Motor neuron (in vitro differentiated cells): ENCODE measurements at regions of chr7 and their contacts with region 1.

Region 1: DNA sequence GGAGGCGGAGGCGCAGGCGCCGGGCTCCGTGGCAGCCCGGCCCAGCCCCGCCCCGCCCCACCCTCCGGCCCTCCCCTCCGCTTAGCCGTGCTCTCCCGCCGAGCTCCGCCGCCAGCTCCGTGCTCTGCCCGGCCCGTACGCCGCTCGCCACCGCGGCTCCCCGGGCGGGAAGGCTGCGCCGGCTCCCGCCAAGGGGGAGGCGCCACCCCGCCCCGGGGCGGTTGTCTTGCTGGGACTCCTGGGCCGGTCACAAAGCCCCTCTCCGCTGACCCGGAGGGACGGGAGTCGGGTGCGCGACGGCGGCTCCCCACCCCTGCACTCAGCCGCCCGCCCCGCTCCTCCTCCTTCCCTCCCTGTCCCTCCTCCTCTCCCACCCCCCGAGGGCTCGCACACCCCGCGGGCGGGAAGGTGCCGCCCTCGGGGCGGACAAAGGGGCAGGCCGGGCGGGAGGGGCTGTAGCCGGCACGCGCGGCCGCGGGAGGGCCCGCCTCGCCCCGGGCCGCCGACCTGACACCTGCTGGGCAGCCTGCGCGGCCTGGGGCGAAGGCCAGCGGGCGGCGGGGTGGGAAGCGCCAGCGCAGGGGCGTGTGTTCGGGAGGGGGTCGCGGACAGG is 11.5 kb upstream of the SP8 start:
- ATAC-seq: peak; percentile 68 to 87 (median 82)
- H3K4me3 ChIP-seq: peak overlapping the region; percentile 46 to 69 (median 53)
- H3K27ac ChIP-seq: peak overlapping the region; percentile 78 to 85
- H3K4me1 ChIP-seq: peaks cover 20 to 45% of the 10 kb centered on the region in 2 donors

Region 2: GRCh38 chr7:20959271-20959670 is 161.1 kb after region 1 on chr7:
- in situ Hi-C with region 1: loop called in 2 of 9 experiments (anchors 25 kb)
- ATAC-seq: no peak
- H3K4me3 ChIP-seq: no peak overlapping the region
- H3K27ac ChIP-seq: no peak overlapping the region
- H3K4me1 ChIP-seq: peaks cover 29 to 53% of the 10 kb centered on the region in 2 donors

Region 3: DNA sequence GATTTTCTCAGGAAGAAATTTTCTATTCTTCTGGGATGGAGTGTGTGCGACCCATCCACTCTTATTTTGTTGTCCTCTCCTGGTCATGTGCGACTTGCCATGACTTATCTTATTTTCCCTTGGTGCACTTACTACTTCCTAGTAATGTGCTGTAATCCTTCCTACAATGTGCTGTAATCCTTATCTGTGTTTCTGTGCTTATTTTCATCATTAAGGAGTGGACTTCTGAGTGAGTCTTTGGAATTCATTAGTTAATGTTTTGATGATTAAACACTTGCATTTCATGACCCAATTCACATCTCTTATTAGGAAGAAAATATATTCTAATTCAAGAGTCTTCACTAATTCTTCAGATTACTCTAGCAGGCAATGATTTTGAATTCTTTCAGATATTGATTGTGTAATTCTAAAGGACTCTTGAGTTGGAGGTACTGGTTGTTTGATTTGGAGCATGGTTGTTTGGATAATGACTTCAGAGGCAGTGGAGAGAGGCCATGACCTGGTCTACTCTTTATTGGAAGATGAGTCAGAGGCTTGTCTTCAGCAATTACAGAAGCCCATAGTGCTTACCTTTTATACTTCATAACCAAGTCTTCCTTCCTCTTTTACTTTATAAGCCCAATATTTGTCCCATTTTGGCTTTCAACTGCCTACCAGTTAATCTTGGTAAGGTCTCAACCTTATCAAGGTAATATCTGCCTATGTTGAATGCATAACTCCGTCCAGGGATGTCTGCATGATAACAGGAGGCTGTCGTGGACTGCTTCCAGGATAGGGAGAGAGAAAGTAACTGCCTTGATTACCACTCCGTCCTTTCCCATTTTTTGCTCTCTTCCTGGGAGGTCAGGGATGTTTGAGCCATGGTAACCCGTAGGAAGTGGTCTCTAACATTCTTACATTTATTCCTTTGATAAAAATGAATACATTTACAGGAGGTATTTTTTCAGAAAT is 266.8 kb after region 1 on chr7:
- in situ Hi-C with region 1: no loop called
- ATAC-seq: peak in 4 of 8 experiments; percentile 47 to 86 (median 66)
- H3K4me3 ChIP-seq: no peak overlapping the region
- H3K27ac ChIP-seq: no peak overlapping the region
- H3K4me1 ChIP-seq: peaks cover 0 to 3% of the 10 kb centered on the region in 2 donors

Region 4: GRCh38 chr7:21253740-21254687 is 455.8 kb after region 1 on chr7:
- in situ Hi-C with region 1: loop called in 6 of 9 experiments (anchors 10 to 25 kb)
- ATAC-seq: peak; percentile 81 to 100 (median 97)
- H3K4me3 ChIP-seq: peak overlapping the region in 3 of 5 donors; percentile 7 to 20 (median 7)
- H3K27ac ChIP-seq: no peak overlapping the region
- H3K4me1 ChIP-seq: peaks cover 34 to 49% of the 10 kb centered on the region in 2 donors

Region 5: DNA sequence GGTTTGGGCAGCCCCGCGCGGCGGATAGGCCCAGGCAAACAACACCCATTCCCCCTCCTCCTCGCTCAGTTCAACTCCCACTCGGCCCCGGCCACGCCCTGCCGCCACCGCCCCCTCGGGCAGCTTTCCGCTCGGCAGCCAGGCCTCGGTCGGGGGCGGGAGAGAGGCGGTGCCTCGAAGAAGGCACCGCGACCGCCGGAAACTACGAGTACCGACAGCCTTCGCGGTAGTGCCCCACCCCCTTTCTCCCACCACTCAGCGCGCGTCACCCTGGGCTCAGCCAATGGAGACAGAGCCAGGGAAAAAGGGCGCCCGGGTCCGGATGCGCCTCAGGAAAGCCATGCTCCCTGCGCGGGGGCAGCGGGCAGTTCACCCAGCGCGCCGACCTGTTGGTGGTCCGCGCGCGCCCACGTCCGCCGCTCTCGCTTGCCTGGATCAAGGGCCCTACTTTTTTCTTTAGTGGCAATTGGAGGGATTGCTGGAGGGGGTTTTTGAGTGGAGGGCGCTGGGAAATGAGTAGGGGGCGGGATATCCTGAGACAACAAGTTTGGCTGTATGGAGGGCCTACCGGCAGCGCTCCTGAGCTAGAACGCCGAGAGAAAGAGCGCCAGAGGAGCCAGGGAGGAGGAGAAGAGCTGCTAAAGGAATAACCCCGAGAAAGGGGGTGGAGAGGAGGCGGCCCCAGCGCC is 629.1 kb after region 1 on chr7:
- in situ Hi-C with region 1: loop called in 1 of 9 experiments (anchors 25 kb)
- ATAC-seq: peak; percentile 78 to 84 (median 81)
- H3K4me3 ChIP-seq: peak overlapping the region; percentile 61 to 78 (median 66)
- H3K27ac ChIP-seq: peak overlapping the region; percentile 85 to 92
- H3K4me1 ChIP-seq: peaks cover 24 to 25% of the 10 kb centered on the region in 2 donors

Region 6: DNA sequence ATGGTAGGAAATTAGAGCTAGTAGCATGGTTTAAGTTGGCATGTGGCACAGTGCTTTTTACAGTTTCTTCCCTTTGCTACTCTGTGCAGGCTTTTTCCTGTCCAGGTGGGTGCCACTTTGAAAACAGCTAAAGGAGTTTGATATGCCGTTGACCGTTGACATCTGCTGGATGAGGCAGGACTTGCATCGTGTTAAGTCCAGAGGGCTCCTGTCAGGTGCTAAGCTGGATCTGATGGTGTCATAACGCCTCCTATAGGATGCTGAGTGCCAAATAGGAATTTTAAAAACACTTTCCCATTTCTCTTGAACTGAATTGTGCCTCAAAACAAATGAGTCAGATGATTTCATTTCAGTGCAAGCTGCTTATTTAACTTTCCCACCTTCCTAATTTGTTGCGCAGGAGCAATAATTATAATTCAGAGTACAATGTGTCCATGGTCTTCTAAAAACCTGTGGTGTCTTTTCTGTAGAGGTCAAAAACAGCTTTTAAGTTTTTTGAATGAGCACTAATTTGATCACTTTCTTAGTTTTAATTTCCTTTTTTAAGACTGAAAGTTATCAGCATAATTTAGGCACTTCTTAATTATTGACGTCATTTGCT is 969.2 kb after region 1 on chr7:
- in situ Hi-C with region 1: loop called in 4 of 9 experiments (anchors 25 kb)
- ATAC-seq: peak; percentile 72 to 100 (median 82)
- H3K4me3 ChIP-seq: no peak overlapping the region
- H3K27ac ChIP-seq: no peak overlapping the region
- H3K4me1 ChIP-seq: peaks cover 16 to 21% of the 10 kb centered on the region in 2 donors